Activated naive CD8-positive, alpha-beta T cell treated with anti-CD3 and anti-CD28 coated beads, Interleukin-2, amount 10 ng/mL, durations not matched to agents 7 days and 5 days (primary cell): ENCODE measurements at regions of chr2 and their contacts with region 1.

Region 1: GRCh38 chr2:96241900-96242611 is 23.7 kb downstream of the TMEM127 start:
- DNase-seq: peak; percentile 43
- ATAC-seq: peak; percentile 96
- H3K4me3 Mint-ChIP-seq: peak overlapping the region; percentile 74
- H3K27ac Mint-ChIP-seq: peak overlapping the region; percentile 97
- H3K4me1 Mint-ChIP-seq: peaks cover 41% of the 10 kb centered on the region
- H3K27me3 Mint-ChIP-seq: no peaks in the 10 kb centered on the region

Region 2: GRCh38 chr2:96254571-96254970 is 12.5 kb after region 1 on chr2:
- POLR2A ChIA-PET with region 1: interaction called, 10 read pairs
- DNase-seq: no peak
- ATAC-seq: no peak
- H3K4me3 Mint-ChIP-seq: no peak overlapping the region
- H3K27ac Mint-ChIP-seq: peak overlapping the region; percentile 44
- H3K4me1 Mint-ChIP-seq: peaks cover 33% of the 10 kb centered on the region
- H3K27me3 Mint-ChIP-seq: no peaks in the 10 kb centered on the region